GM12878 (cell line): ENCODE measurements at regions of chr11 and their contacts with region 1.

Region 1: DNA sequence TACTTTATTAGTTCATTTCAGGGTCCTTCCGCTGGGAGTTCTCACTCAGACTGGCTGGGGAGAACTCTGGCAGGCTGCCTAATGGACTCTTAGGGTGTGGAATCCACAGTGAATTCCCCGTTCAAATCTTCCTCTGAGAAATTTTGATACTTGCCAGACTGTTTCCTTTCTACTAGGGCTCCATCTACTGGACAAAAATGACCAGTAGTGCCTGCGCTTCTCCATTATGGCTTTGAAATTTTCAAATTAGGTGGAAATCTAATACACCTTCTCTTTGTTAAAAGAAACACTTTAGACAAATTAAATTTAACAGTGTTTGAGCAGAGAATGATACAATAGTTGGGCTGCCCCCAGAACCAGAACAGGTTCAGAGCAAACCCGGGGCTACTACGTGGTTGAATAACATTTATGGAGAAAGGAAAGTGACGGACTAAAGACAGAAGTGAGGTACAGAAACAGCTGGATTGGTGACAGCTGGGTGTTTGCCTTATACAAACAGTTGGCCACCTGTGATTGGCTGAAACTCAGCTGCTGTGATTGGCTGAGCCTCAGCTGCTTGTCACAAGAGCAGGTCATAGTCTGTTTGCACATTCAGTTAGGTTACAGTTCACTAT is 52.9 kb upstream of the FDX1 start:
- DNase-seq: peak; percentile 36
- ATAC-seq: peak; percentile 50
- H3K4me3 ChIP-seq: no peak overlapping the region
- H3K27ac ChIP-seq: no peak overlapping the region
- H3K4me1 ChIP-seq: peaks cover 27% of the 10 kb centered on the region
- H3K27me3 ChIP-seq: no peaks in the 10 kb centered on the region
- CTCF ChIP-seq: peak; percentile 60 to 83 (median 80)
- EP300 ChIP-seq: no peak
- POLR2A ChIP-seq: no peak
- RAD21 ChIP-seq: peak; percentile 83

Region 2: DNA sequence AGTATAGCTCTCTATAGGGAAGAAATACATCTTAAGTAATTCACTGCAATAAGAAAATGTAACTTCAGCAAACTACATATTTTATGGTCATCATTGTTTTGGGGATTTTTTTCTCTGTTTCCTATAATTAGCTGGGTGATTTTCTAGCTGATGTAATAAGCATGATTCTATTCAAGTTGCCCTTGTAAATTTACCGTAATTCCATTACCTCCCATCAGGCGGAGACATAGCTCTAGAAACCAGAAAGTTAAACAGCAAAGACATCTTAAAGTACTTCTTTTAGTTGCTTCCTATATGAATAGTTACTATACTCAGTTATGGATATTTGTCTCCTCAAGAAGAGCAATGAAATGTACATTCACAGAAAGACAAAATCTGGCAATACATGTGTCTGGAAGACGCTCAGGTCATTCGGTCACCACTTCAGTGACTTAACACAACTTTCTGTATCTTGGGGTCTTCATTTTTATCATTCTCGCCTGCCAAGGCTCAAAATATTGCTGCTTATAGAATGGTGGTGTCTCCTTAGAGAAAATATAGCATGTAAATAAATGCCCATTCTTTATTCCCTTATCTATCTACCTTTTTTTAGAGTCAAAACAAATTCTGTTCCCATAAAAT is 523.6 kb before region 1 on chr11:
- CTCF ChIA-PET with region 1: interaction called, 11 read pairs
- POLR2A ChIA-PET with region 1: no interaction called
- RAD21 ChIA-PET with region 1: interaction called, 6 read pairs
- SMC1A ChIA-PET with region 1: interaction called, 5 read pairs
- in situ Hi-C with region 1: no loop called
- intact Hi-C with region 1: loop called (anchors 5 kb)
- DNase-seq: peak; percentile 56
- ATAC-seq: peak; percentile 89
- H3K4me3 ChIP-seq: no peak overlapping the region
- H3K27ac ChIP-seq: no peak overlapping the region
- H3K4me1 ChIP-seq: no peaks in the 10 kb centered on the region
- H3K27me3 ChIP-seq: no peaks in the 10 kb centered on the region
- CTCF ChIP-seq: peak; percentile 69 to 95 (median 81)
- EP300 ChIP-seq: no peak
- POLR2A ChIP-seq: no peak
- RAD21 ChIP-seq: peak; percentile 99

Region 3: DNA sequence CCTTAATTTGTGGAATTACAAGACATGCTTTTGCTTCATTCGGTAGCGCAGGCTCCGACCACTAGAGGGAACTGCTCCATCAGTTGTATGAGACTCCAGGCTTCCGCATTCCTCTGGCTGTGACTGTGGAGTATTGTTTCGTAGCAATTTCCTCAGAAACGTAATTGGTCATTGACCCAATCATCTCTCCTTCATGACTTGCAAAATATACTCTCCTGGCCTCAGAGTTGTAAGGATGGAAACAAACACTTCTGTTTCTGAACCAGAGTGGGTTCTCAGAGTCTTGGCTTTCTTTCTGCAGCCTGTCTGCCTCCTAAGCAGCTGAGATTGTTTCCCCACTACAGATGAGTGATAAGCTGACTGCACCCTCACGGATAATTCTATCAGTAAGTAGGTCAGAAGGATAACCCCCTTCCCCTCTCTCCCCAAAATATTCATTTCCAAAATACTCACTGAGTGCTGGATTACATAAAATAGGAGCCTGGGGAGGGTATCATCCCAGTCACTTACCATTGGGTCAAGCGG is 430.4 kb before region 1 on chr11:
- CTCF ChIA-PET with region 1: interaction called, 7 read pairs
- POLR2A ChIA-PET with region 1: no interaction called
- RAD21 ChIA-PET with region 1: interaction called, 3 read pairs
- SMC1A ChIA-PET with region 1: interaction called, 4 read pairs
- in situ Hi-C with region 1: no loop called
- intact Hi-C with region 1: loop called (anchors 2 kb)
- DNase-seq: peak; percentile 92
- ATAC-seq: peak; percentile 93
- H3K4me3 ChIP-seq: peak overlapping the region; percentile 50; the same call in 1 of the 2 replicates
- H3K27ac ChIP-seq: peak overlapping the region; percentile 83
- H3K4me1 ChIP-seq: peaks cover 6% of the 10 kb centered on the region; the same call in 1 of the 2 replicates
- H3K27me3 ChIP-seq: no peaks in the 10 kb centered on the region
- CTCF ChIP-seq: peak; percentile 93 to 98 (median 96)
- EP300 ChIP-seq: no peak
- POLR2A ChIP-seq: no peak
- RAD21 ChIP-seq: peak; percentile 97

Region 4: DNA sequence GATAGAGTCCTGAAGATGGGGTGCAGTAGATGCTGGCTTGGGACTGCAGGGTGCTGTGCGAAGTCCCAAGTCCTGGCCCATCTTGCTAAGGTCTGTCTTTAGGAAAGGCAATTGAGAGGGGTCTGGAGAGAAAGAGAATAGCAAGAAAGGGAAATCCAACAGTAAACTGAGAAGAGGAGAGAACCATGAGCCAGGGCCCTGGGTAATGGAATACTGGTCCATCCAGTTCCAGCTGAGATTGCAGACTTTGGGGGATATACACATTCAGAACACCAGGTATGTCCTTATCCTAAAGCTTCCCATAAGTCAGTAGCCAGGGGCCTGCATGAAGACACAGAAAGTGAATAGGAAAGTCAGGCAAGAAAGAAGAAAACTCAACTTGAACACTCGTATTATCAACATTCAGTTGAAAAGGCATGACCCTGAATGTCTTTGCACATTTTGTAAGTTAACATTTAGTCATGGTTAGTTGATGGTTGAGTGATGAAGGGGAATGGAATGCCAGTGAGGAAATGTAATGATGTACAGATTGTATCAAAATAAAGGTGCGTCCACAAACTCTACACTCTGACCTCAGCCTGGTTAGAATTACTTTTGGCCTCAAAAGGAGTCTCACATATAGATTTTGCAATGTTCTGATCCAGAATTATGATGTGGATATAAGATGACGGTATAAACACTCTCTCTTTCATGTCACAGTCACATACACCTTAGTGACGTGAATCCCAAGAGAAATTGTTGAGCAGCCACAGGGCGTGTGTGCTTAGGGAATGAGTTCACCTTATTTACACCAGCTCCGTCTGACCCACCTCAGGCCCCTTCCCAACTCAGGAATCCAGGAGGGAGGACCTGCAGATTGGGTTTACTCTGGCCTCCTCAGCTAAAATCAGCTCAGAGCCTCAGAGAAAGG is 180.7 kb before region 1 on chr11:
- CTCF ChIA-PET with region 1: interaction called, 81 read pairs
- POLR2A ChIA-PET with region 1: interaction called, 4 read pairs
- RAD21 ChIA-PET with region 1: interaction called, 42 read pairs
- SMC1A ChIA-PET with region 1: interaction called, 90 read pairs
- in situ Hi-C with region 1: loop called (anchors 5 kb)
- intact Hi-C with region 1: loop called (anchors 1 kb)
- DNase-seq: no peak
- ATAC-seq: no peak
- H3K4me3 ChIP-seq: no peak overlapping the region
- H3K27ac ChIP-seq: no peak overlapping the region
- H3K4me1 ChIP-seq: peaks cover 4% of the 10 kb centered on the region; the same call in 1 of the 2 replicates
- H3K27me3 ChIP-seq: no peaks in the 10 kb centered on the region
- CTCF ChIP-seq: no peak
- EP300 ChIP-seq: no peak
- POLR2A ChIP-seq: no peak
- RAD21 ChIP-seq: no peak

Region 5: GRCh38 chr11:110251837-110252236 is 125.0 kb before region 1 on chr11:
- CTCF ChIA-PET with region 1: interaction called, 10 read pairs
- POLR2A ChIA-PET with region 1: no interaction called
- RAD21 ChIA-PET with region 1: no interaction called
- SMC1A ChIA-PET with region 1: interaction called, 3 read pairs
- in situ Hi-C with region 1: no loop called
- intact Hi-C with region 1: no loop called
- DNase-seq: no peak
- ATAC-seq: peak; percentile 28; the same call in 1 of the 3 replicates
- H3K4me3 ChIP-seq: no peak overlapping the region
- H3K27ac ChIP-seq: no peak overlapping the region
- H3K4me1 ChIP-seq: no peaks in the 10 kb centered on the region
- H3K27me3 ChIP-seq: no peaks in the 10 kb centered on the region
- CTCF ChIP-seq: no peak
- EP300 ChIP-seq: no peak
- POLR2A ChIP-seq: no peak
- RAD21 ChIP-seq: no peak

Region 6: DNA sequence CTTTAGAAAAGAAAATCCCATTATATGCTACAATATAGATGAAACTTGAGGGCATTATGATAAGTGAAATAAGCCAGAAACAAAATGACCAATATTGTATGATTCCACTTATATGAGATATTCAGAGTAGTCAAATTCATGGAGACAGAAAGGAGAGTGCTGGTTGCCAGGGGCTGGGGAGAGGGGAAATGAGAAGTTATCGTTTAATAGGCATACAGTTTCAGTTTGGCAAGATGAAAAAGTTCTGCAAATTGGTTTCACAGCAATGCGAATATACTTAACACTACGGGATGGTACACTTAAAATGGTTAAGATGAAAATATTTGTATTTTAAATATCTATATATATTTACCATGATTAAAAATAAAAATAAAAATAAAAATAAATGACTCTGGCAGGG is 49.3 kb before region 1 on chr11:
- CTCF ChIA-PET with region 1: interaction called, 9 read pairs
- POLR2A ChIA-PET with region 1: no interaction called
- RAD21 ChIA-PET with region 1: interaction called, 11 read pairs
- SMC1A ChIA-PET with region 1: interaction called, 9 read pairs
- in situ Hi-C with region 1: no loop called
- intact Hi-C with region 1: loop called (anchors 2 kb)
- DNase-seq: no peak
- ATAC-seq: peak; percentile 41
- H3K4me3 ChIP-seq: peak overlapping the region; percentile 64
- H3K27ac ChIP-seq: peak overlapping the region; percentile 28; the same call in 1 of the 2 replicates
- H3K4me1 ChIP-seq: peaks cover 8% of the 10 kb centered on the region; the same call in 1 of the 2 replicates
- H3K27me3 ChIP-seq: no peaks in the 10 kb centered on the region
- CTCF ChIP-seq: no peak
- EP300 ChIP-seq: no peak
- POLR2A ChIP-seq: no peak
- RAD21 ChIP-seq: no peak

Region 7: DNA sequence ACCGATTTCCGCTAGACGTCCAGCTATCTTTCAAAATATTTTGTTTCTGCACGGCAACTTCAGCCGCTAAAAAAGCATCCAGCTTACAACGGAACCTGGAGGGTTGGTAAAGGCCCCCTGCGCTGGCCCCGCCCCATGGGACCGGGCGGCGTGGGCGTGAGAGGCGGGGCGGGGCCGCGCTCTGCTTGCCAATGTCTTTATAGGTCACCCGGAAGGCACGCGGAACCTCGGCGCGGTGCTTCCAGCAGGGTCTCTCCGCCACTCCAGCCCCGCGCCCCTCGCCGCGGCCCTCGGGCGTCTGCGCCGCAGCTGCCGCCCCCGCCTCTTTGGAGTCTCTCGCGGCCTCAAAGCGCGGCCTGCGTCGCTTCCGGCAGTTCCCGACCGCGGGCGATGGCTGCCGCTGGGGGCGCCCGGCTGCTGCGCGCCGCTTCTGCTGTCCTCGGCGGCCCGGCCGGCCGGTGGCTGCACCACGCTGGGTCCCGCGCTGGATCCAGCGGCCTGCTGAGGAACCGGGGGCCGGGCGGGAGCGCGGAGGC is 53.0 kb after region 1 on chr11 and contains the start of gene FDX1:
- CTCF ChIA-PET with region 1: interaction called, 20 read pairs
- POLR2A ChIA-PET with region 1: interaction called, 3 read pairs
- RAD21 ChIA-PET with region 1: interaction called, 14 read pairs
- SMC1A ChIA-PET with region 1: interaction called, 12 read pairs
- in situ Hi-C with region 1: no loop called
- intact Hi-C with region 1: loop called (anchors 2 kb)
- DNase-seq: peak; percentile 23
- ATAC-seq: peak; percentile 92
- H3K4me3 ChIP-seq: peak within 1 kb of the TSS; percentile 67
- H3K27ac ChIP-seq: peak within 1 kb of the TSS; percentile 47
- H3K4me1 ChIP-seq: peaks cover 10% of the 10 kb centered on the region
- H3K27me3 ChIP-seq: no peaks in the 10 kb centered on the region
- CTCF ChIP-seq: peak; percentile 41 to 61 (median 42); a peak in 5 of 6 replicates
- EP300 ChIP-seq: no peak
- POLR2A ChIP-seq: peak; percentile 78
- RAD21 ChIP-seq: no peak
- polyA plus RNA-seq, gene FDX1: 3.9 to 9.6 TPM